ENCODE measurements at regions of chr22 and their contacts with region 1.

Region 1: DNA sequence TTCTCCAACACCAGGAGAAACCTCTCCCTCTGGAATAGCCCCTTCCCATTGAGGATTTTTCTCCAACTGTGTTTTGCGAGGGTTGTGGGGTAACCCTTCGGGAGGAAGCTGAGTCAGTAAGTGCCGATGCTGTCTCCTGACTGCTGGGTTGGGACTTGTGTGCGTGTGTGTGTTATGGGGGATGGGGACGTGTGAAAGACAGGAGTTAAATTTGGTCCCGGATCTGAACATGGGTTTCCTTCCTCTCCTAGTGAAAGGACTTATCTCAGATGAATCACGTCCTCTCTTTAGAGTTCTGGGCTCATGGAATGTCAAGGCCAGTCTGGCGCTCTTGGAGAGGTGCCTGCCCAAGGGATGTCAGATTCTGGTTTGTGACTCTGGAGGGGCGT is 33.3 kb downstream of the KIAA1671 start:
- DNase-seq: no peak
- H3K4me3 ChIP-seq: no peak overlapping the region
- H3K27ac ChIP-seq: no peak overlapping the region
- H3K4me1 ChIP-seq: peaks cover 0 to 4% (median 1%) of the 10 kb centered on the region in 4 experiments; a peak in 4 of 7 replicates
- H3K27me3 ChIP-seq: no peaks in the 10 kb centered on the region
- CTCF ChIP-seq: no peak
- EP300 ChIP-seq: no peak
- POLR2A ChIP-seq: no peak
- RAD21 ChIP-seq: no peak

Region 2: DNA sequence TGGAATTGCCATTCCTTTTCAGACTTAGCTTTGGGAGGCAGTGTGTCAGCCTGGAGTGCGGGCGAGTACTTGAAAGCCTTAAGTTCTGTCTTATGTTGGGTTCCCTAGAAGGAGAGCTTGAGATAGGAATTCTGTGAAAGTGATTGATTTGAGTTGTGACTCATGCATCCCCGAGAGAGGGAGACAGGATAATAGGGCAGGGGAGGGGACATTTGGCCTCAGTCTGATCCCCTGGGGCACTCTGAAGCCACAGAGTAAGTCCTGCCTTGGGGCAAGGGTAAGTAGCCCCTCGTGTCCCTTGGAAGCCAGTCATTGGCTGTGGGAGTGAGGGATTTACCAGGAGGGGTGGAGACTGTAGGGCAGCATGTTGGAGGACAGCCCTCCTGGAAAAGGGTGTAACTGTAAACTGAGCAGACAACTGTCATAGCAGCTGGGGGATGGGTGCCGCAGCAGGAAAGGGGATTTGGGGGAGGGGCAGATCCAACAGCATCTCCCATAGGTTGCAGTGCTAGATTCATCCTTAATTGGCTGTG is 10.7 kb after region 1 on chr22:
- CTCF ChIA-PET with region 1: interaction called, 26 read pairs
- POLR2A ChIA-PET with region 1: interaction called, 4 read pairs
- DNase-seq: peak; percentile 73 to 75
- H3K4me3 ChIP-seq: peak overlapping the region in 2 of 4 experiments; percentile 14 to 31; a peak in 2 of 8 replicates
- H3K27ac ChIP-seq: peak overlapping the region; percentile 20
- H3K4me1 ChIP-seq: peaks cover 14 to 23% (median 18%) of the 10 kb centered on the region in 4 experiments
- H3K27me3 ChIP-seq: no peaks in the 10 kb centered on the region
- CTCF ChIP-seq: no peak
- EP300 ChIP-seq: no peak
- POLR2A ChIP-seq: peak in 1 of 2 experiments; percentile 43; a peak in 1 of 3 replicates
- RAD21 ChIP-seq: no peak

Measured in H1 (cell line).